Activated CD8-positive, alpha-beta T cell treated with anti-CD3 and anti-CD28 coated beads, Interleukin-2, amount 10 ng/mL, durations not matched to agents 7 days and 5 days (primary cell): ENCODE measurements at regions of chr12 and their contacts with region 1.

Region 1: GRCh38 chr12:12837025-12837872 is 24.1 kb downstream of the DDX47 start:
- DNase-seq: peak; percentile 52
- ATAC-seq: peak; percentile 69
- H3K4me3 Mint-ChIP-seq: no peak overlapping the region
- H3K27ac Mint-ChIP-seq: no peak overlapping the region
- H3K4me1 Mint-ChIP-seq: peaks cover 14% of the 10 kb centered on the region
- H3K27me3 Mint-ChIP-seq: no peaks in the 10 kb centered on the region

Region 2: DNA sequence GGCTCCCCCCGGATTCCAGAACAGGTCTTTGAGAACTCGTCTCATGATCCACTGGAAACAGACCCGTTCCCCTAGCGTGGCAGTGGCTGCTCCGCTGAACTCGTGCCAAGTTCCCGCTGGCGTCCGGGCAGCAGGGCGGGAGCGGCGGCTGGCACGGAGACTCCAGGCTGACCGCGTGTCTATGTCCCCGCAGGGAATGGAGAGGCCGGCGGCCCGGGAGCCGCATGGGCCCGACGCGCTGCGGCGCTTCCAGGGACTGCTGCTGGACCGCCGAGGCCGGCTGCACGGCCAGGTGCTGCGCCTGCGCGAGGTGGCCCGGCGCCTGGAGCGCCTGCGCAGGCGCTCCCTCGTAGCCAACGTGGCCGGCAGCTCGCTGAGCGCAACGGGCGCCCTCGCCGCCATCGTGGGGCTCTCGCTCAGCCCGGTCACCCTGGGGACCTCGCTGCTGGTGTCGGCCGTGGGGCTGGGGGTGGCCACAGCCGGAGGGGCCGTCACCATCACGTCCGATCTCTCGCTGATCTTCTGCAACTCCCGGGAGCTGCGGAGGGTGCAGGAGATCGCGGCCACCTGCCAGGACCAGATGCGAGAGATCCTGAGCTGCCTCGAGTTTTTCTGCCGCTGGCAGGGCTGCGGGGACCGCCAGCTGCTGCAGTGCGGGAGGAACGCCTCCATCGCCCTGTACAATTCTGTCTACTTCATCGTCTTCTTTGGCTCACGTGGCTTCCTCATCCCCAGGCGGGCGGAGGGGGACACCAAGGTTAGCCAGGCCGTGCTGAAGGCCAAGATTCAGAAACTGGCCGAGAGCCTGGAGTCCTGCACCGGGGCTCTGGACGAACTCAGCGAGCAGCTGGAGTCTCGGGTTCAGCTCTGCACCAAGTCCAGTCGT is 50.3 kb before region 1 on chr12:
- CTCF ChIA-PET with region 1: interaction called, 26 read pairs
- POLR2A ChIA-PET with region 1: no interaction called
- DNase-seq: peak; percentile 72
- ATAC-seq: peak; percentile 94
- H3K4me3 Mint-ChIP-seq: peak overlapping the region; percentile 80
- H3K27ac Mint-ChIP-seq: peak overlapping the region; percentile 87
- H3K4me1 Mint-ChIP-seq: peaks cover 43% of the 10 kb centered on the region
- H3K27me3 Mint-ChIP-seq: no peaks in the 10 kb centered on the region

Region 3: GRCh38 chr12:12813120-12814101 is 23.8 kb before region 1 on chr12 and contains the start of gene DDX47:
- CTCF ChIA-PET with region 1: interaction called, 18 read pairs
- POLR2A ChIA-PET with region 1: no interaction called
- DNase-seq: peak; percentile 98
- ATAC-seq: peak; percentile 85
- H3K4me3 Mint-ChIP-seq: peak within 1 kb of the TSS; percentile 93
- H3K27ac Mint-ChIP-seq: peak within 1 kb of the TSS; percentile 88
- H3K4me1 Mint-ChIP-seq: peaks cover 79% of the 10 kb centered on the region
- H3K27me3 Mint-ChIP-seq: no peaks in the 10 kb centered on the region
- total RNA-seq, gene DDX47: 56.8 to 57.8 TPM

Region 4: DNA sequence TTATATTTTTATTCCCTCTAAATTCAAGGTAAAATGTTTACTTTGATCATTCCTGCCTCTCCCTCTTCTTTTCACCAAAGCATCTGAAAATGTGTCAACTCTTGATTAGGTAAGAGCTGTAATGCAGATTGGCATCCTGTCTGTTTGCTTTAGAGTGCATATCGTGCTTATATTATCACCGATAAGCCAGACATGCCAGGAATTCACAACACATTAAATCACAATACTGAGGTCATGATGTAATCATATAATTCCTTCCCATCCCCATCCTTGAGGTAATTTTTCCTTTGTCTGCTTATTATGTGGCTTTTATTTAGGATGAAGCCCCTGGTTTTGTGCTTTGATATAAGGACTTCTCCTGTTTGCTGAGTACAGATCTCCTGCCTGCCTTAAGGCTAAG is 14.0 kb before region 1 on chr12:
- CTCF ChIA-PET with region 1: interaction called, 18 read pairs
- POLR2A ChIA-PET with region 1: interaction called, 8 read pairs
- DNase-seq: no peak
- ATAC-seq: no peak
- H3K4me3 Mint-ChIP-seq: no peak overlapping the region
- H3K27ac Mint-ChIP-seq: no peak overlapping the region
- H3K4me1 Mint-ChIP-seq: peaks cover 16% of the 10 kb centered on the region
- H3K27me3 Mint-ChIP-seq: no peaks in the 10 kb centered on the region

Region 5: DNA sequence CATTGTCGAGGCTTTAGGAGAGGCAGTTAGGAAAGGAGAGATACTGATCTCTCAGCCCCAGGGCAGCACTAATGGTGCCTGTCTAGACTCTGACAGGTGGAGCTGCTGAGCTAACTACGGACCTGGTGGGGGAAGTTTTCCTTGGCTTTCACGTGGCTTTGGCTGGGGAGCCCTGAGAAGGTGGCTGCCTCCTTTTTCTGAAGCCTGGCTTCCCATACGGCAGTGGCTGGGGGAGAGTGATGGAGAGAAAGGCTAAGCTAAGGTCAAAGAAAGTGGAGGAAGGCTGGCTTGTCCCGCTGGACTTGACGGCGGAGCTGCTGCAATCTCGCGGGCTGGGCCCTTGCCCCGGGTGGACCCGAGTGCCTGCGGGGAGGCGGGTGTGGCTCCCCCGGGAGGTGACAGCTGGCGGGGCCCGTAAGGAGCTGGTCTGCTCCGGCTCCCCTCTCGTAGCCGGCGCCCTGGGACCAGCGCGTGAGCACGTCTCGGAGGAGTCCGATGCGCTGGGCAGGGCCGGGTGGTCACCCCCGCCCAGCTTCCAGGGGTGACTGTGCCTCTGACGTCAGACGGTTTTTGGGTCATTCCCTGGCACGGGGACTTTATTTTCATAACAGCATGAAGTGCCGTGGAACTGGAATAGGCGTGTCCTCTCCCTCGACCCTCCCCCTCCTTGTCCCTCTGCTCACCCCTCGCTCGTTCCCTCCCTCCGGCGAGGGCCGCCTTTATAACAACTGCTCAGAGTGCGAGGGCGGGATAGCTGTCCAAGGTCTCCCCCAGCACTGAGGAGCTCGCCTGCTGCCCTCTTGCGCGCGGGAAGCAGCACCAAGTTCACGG is 53.8 kb after region 1 on chr12 and contains the start of gene GPRC5A:
- CTCF ChIA-PET with region 1: interaction called, 12 read pairs
- POLR2A ChIA-PET with region 1: no interaction called
- DNase-seq: peak; percentile 35
- ATAC-seq: peak; percentile 76
- H3K4me3 Mint-ChIP-seq: peak within 1 kb of the TSS; percentile 69
- H3K27ac Mint-ChIP-seq: no peak within 1 kb of the TSS
- H3K4me1 Mint-ChIP-seq: peaks cover 8% of the 10 kb centered on the region
- H3K27me3 Mint-ChIP-seq: peaks cover 37% of the 10 kb centered on the region
- total RNA-seq, gene GPRC5A: not detected